ENCODE measurements at regions of chr6 and their contacts with region 1.

Region 1: GRCh38 chr6:111478749-111479148 is 4.3 kb downstream of the REV3L start:
- DNase-seq: peak; percentile 49
- ATAC-seq: peak; percentile 60
- H3K4me3 ChIP-seq: 0 out of 2 replicates have a peak overlapping the region, but pooled peaks have one; percentile 0
- H3K27ac ChIP-seq: peak overlapping the region; percentile 5
- H3K4me1 ChIP-seq: peaks cover 12% of the 10 kb centered on the region; the same call in 1 of the 2 replicates
- H3K27me3 ChIP-seq: no peaks in the 10 kb centered on the region
- CTCF ChIP-seq: peak; percentile 33 to 71 (median 63); a peak in 4 of 6 replicates
- EP300 ChIP-seq: no peak
- POLR2A ChIP-seq: no peak
- RAD21 ChIP-seq: peak; percentile 70

Region 2: DNA sequence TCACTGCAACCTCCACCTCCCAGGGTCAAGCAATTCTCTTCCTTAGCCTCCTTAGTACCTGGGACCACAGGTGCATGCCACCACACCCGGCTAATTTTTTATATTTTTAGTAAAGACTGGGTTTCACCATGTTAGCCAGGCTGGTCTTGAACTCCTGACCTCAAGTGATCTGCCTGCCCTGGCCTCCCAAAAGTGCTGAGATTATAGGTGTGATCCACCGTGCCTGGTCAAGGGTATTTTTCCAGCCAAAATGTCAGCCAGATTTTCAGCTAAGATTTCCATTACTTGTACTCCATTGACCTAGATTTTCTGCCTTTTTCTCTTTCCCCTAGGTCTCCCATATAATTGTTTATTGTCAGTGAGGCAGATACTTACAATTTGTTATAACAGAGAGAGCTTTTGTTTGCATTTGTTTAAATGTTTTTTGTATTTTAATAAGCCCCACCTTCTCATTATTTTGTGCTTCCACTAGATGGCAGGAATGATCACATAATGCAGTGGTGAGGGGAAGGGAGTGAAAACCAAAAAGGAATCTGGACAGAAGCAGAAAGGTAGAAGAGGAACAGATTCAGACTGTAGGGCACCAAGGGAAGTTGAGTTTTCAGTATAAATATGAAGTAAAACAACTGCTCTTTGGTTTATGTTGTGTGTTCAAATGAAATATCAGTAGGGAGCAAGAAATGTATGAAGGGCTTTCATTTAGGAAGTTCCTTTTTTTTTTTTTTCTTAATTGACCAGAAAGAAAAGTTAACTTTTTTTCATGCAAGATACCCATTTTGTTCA is 467.2 kb before region 1 on chr6:
- CTCF ChIA-PET with region 1: interaction called, 11 read pairs
- POLR2A ChIA-PET with region 1: interaction called, 3 read pairs
- RAD21 ChIA-PET with region 1: interaction called, 8 read pairs
- SMC1A ChIA-PET with region 1: interaction called, 4 read pairs
- in situ Hi-C with region 1: no loop called
- intact Hi-C with region 1: no loop called
- DNase-seq: peak; percentile 15
- ATAC-seq: peak; percentile 90
- H3K4me3 ChIP-seq: no peak overlapping the region
- H3K27ac ChIP-seq: no peak overlapping the region
- H3K4me1 ChIP-seq: no peaks in the 10 kb centered on the region
- H3K27me3 ChIP-seq: no peaks in the 10 kb centered on the region
- CTCF ChIP-seq: peak; percentile 51 to 75 (median 53); a peak in 5 of 6 replicates
- EP300 ChIP-seq: no peak
- POLR2A ChIP-seq: no peak
- RAD21 ChIP-seq: peak; percentile 93

Region 3: GRCh38 chr6:111301946-111302345 is 176.8 kb before region 1 on chr6:
- CTCF ChIA-PET with region 1: interaction called, 7 read pairs
- POLR2A ChIA-PET with region 1: interaction called, 3 read pairs
- RAD21 ChIA-PET with region 1: interaction called, 12 read pairs
- SMC1A ChIA-PET with region 1: interaction called, 9 read pairs
- in situ Hi-C with region 1: no loop called
- intact Hi-C with region 1: no loop called
- DNase-seq: no peak
- ATAC-seq: peak; percentile 86
- H3K4me3 ChIP-seq: no peak overlapping the region
- H3K27ac ChIP-seq: peak overlapping the region; percentile 35; the same call in 1 of the 2 replicates
- H3K4me1 ChIP-seq: peaks cover 15% of the 10 kb centered on the region
- H3K27me3 ChIP-seq: no peaks in the 10 kb centered on the region
- CTCF ChIP-seq: no peak
- EP300 ChIP-seq: no peak
- POLR2A ChIP-seq: no peak
- RAD21 ChIP-seq: no peak

Region 4: DNA sequence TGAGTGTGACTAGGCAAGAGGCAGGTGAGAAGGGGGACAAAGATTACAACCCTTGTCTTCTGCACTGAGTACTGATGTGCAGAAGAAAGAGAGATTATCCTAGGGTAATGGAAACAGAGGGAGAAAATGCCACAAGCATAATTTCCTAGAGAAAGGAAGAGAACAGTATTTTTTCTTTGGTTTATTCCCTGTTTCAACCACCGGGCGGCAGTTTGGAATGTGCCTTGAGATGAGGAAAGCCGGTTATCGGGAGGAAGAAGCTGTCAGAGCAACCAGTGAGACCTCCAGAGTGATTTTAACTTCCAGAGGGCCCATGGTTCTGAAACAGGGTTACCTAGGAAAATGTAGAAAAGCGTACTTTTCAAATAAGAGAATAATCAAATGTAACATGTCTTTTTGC is 117.1 kb before region 1 on chr6:
- CTCF ChIA-PET with region 1: interaction called, 24 read pairs
- POLR2A ChIA-PET with region 1: interaction called, 3 read pairs
- RAD21 ChIA-PET with region 1: interaction called, 21 read pairs
- SMC1A ChIA-PET with region 1: interaction called, 13 read pairs
- in situ Hi-C with region 1: no loop called
- intact Hi-C with region 1: loop called (anchors 5 kb)
- DNase-seq: no peak
- ATAC-seq: no peak
- H3K4me3 ChIP-seq: no peak overlapping the region
- H3K27ac ChIP-seq: no peak overlapping the region
- H3K4me1 ChIP-seq: no peaks in the 10 kb centered on the region
- H3K27me3 ChIP-seq: no peaks in the 10 kb centered on the region
- CTCF ChIP-seq: peak; percentile 18 to 36 (median 23); a peak in 2 of 6 replicates
- EP300 ChIP-seq: no peak
- POLR2A ChIP-seq: no peak
- RAD21 ChIP-seq: peak; percentile 48

Region 5: DNA sequence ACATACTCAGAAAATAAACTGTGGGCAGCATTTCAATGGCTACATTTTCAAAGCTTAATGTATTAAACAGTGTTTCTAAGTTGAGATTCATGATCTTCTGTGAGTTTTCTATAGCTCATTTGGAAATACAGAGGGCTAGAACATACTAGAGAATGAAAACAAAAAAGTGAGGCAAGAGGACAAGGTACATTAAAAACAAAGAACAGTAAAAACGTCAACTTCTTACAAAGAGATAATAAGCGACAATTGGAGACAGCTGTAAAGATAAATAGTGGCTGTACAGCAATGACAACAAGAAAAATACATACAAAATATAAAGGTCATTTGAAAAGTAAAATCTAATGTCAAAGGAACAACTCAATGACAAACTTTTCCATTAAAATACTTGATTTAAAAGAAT is 90.1 kb before region 1 on chr6:
- CTCF ChIA-PET with region 1: interaction called, 12 read pairs
- POLR2A ChIA-PET with region 1: no interaction called
- RAD21 ChIA-PET with region 1: interaction called, 14 read pairs
- SMC1A ChIA-PET with region 1: interaction called, 19 read pairs
- in situ Hi-C with region 1: no loop called
- intact Hi-C with region 1: no loop called
- DNase-seq: no peak
- ATAC-seq: no peak
- H3K4me3 ChIP-seq: no peak overlapping the region
- H3K27ac ChIP-seq: no peak overlapping the region
- H3K4me1 ChIP-seq: no peaks in the 10 kb centered on the region
- H3K27me3 ChIP-seq: no peaks in the 10 kb centered on the region
- CTCF ChIP-seq: no peak
- EP300 ChIP-seq: no peak
- POLR2A ChIP-seq: no peak
- RAD21 ChIP-seq: no peak

Region 6: DNA sequence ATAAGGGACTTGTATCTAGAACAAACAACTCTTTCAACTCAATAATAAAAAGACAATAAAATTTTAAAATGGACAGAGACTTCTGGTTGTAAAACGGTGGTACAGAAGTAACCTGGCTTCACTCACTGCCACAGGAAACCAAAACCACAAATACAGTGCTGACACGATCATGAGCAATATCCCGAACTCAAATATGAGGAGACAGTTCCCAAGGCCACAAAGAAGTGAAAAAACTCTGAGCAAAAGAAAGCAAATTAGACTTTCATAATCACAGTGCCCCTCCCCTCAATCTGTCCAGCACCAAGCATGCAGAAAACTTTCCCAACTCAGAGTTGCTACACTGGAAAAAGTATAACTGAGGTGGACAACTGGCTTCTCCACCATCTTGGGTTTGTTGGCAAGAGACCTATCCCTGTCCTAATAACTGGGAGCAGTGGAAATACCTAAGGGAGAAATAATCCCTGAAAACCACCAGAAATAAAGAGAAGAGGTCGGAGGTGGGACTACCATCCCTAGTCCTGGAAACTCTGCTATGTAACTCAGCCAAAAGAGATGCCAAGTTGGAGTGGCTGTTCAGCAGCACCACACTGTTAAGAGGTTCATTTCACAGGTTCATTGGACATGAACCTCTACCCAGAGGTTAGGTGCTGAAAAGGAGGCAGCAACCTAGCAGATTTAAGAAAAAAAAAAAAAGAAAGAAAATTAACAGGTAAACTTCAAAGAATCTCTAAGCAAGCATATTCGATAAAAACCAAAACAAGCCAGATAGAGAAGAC is 51.2 kb before region 1 on chr6:
- CTCF ChIA-PET with region 1: interaction called, 4 read pairs
- POLR2A ChIA-PET with region 1: interaction called, 3 read pairs
- RAD21 ChIA-PET with region 1: interaction called, 6 read pairs
- SMC1A ChIA-PET with region 1: interaction called, 13 read pairs
- in situ Hi-C with region 1: no loop called
- intact Hi-C with region 1: loop called (anchors 5 kb)
- DNase-seq: peak; percentile 54
- ATAC-seq: peak; percentile 81
- H3K4me3 ChIP-seq: peak overlapping the region; percentile 54; the same call in 1 of the 2 replicates
- H3K27ac ChIP-seq: peak overlapping the region; percentile 73
- H3K4me1 ChIP-seq: peaks cover 25% of the 10 kb centered on the region
- H3K27me3 ChIP-seq: no peaks in the 10 kb centered on the region
- CTCF ChIP-seq: no peak
- EP300 ChIP-seq: no peak
- POLR2A ChIP-seq: no peak
- RAD21 ChIP-seq: no peak

Region 7: DNA sequence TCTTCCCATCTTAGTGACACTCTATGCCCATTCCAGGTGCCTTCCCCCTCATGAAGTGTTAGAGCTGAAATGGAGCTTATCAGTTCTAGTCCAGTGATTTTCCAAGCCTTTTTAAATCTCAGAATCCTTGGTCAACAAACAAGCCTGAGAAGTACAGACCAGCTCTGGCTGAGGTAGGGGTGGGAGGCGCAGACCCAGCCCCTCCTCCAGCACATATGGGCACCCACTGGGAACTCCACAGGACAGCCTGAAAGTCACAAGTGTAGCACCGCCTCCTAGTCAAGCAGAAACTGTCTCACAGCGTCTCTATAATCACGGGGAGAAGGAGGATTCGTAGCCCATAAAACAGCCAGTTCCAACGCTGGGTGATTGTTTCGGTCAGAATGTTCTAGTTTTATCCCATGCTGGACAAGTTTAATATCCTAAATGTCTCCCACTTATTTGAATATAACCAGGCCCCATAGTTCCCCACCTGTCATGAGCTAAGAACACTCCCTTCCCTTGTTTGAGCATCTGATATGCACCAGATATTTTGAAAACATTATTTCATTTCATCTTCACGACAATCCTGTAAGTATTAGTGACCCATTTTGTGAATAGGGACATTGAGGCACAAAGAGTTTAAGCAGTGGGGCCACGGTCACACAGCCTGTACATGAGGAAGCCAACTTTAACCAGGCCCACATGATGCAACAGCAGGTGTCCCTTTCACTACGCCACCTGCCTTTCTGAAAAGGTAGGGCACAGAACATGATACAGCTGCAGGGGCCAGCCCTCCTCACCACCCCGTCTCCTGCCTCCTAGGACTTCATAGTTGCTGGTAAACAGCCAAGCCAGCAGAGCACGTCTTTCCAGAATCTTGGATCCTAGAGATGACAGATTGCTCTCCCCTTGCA is 86.8 kb after region 1 on chr6:
- CTCF ChIA-PET with region 1: interaction called, 14 read pairs
- POLR2A ChIA-PET with region 1: interaction called, 5 read pairs
- RAD21 ChIA-PET with region 1: interaction called, 11 read pairs
- SMC1A ChIA-PET with region 1: interaction called, 8 read pairs
- in situ Hi-C with region 1: no loop called
- intact Hi-C with region 1: no loop called
- DNase-seq: no peak
- ATAC-seq: peak; percentile 96
- H3K4me3 ChIP-seq: no peak overlapping the region
- H3K27ac ChIP-seq: peak overlapping the region; percentile 53
- H3K4me1 ChIP-seq: peaks cover 15% of the 10 kb centered on the region
- H3K27me3 ChIP-seq: no peaks in the 10 kb centered on the region
- CTCF ChIP-seq: peak; percentile 41 to 47 (median 46); a peak in 5 of 6 replicates
- EP300 ChIP-seq: no peak
- POLR2A ChIP-seq: peak; percentile 50
- RAD21 ChIP-seq: peak; percentile 59

Region 8: DNA sequence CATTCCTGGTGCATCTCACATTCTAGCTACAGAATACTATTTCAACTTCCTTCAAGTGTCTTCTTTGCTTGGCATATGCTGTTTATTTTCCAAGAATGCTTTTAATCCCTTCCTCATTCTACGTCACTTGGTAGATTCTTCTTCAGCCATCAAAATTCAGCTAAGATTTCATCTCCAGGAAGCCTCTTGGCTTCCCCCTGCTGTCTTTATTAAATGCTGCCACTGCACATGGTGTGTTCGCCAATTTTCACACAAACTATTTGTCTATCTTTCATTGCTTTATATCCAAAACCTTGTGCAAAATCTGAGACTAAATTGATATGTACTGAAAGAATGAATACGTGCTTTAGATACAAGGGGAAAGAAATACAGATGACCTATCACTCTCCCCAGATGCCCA is 1121.4 kb after region 1 on chr6:
- CTCF ChIA-PET with region 1: no interaction called
- POLR2A ChIA-PET with region 1: no interaction called
- RAD21 ChIA-PET with region 1: no interaction called
- SMC1A ChIA-PET with region 1: no interaction called
- in situ Hi-C with region 1: no loop called
- intact Hi-C with region 1: no loop called
- DNase-seq: no peak
- ATAC-seq: no peak
- H3K4me3 ChIP-seq: no peak overlapping the region
- H3K27ac ChIP-seq: no peak overlapping the region
- H3K4me1 ChIP-seq: no peaks in the 10 kb centered on the region
- H3K27me3 ChIP-seq: no peaks in the 10 kb centered on the region
- CTCF ChIP-seq: no peak
- EP300 ChIP-seq: no peak
- POLR2A ChIP-seq: no peak
- RAD21 ChIP-seq: no peak

Measured in GM12878 (cell line).